ENCODE measurements at regions of chr17 and their contacts with region 1.

Region 1: GRCh38 chr17:42287926-42288802 is at the start of gene STAT5A:
- DNase-seq: peak; percentile 77 to 90
- ATAC-seq: peak; percentile 82 to 96 (median 89)
- H3K4me3 ChIP-seq: peak within 1 kb of the TSS; percentile 86
- H3K4me3 Mint-ChIP-seq: peak within 1 kb of the TSS; percentile 93
- H3K27ac ChIP-seq: peak within 1 kb of the TSS; percentile 93
- H3K27ac Mint-ChIP-seq: peak within 1 kb of the TSS; percentile 93 to 95
- H3K4me1 ChIP-seq: peaks cover 41% of the 10 kb centered on the region
- H3K4me1 Mint-ChIP-seq: peaks cover 39 to 46% of the 10 kb centered on the region in 2 donors
- H3K27me3 ChIP-seq: no peaks in the 10 kb centered on the region
- H3K27me3 Mint-ChIP-seq: no peaks in the 10 kb centered on the region
- CTCF ChIP-seq: no peak
- total RNA-seq, gene STAT5A: 112 to 135 (median 117) TPM

Region 2: GRCh38 chr17:42183741-42184711 is 104.1 kb before region 1 on chr17:
- intact Hi-C with region 1: loop called (anchors 5 kb)
- DNase-seq: peak; percentile 82 to 88
- ATAC-seq: peak; percentile 73 to 86 (median 73)
- H3K4me3 ChIP-seq: peak overlapping the region; percentile 78
- H3K4me3 Mint-ChIP-seq: peak overlapping the region; percentile 94
- H3K27ac ChIP-seq: peak overlapping the region; percentile 88
- H3K27ac Mint-ChIP-seq: peak overlapping the region; percentile 85 to 86
- H3K4me1 ChIP-seq: peaks cover 44% of the 10 kb centered on the region
- H3K4me1 Mint-ChIP-seq: peaks cover 22 to 36% of the 10 kb centered on the region in 2 donors
- H3K27me3 ChIP-seq: peaks cover 12% of the 10 kb centered on the region
- H3K27me3 Mint-ChIP-seq: peaks cover 0 to 12% of the 10 kb centered on the region in 2 donors
- CTCF ChIP-seq: peak; percentile 90

Region 3: GRCh38 chr17:42248351-42249179 is 39.6 kb before region 1 on chr17:
- intact Hi-C with region 1: loop called (anchors 1 kb)
- DNase-seq: peak; percentile 69 to 95
- ATAC-seq: peak; percentile 93 to 98 (median 96)
- H3K4me3 ChIP-seq: peak overlapping the region; percentile 28
- H3K4me3 Mint-ChIP-seq: peak overlapping the region; percentile 93
- H3K27ac ChIP-seq: peak overlapping the region; percentile 88
- H3K27ac Mint-ChIP-seq: peak overlapping the region; percentile 97 to 100
- H3K4me1 ChIP-seq: peaks cover 32% of the 10 kb centered on the region
- H3K4me1 Mint-ChIP-seq: peaks cover 39 to 48% of the 10 kb centered on the region in 2 donors
- H3K27me3 ChIP-seq: no peaks in the 10 kb centered on the region
- H3K27me3 Mint-ChIP-seq: no peaks in the 10 kb centered on the region
- CTCF ChIP-seq: no peak

Region 4: DNA sequence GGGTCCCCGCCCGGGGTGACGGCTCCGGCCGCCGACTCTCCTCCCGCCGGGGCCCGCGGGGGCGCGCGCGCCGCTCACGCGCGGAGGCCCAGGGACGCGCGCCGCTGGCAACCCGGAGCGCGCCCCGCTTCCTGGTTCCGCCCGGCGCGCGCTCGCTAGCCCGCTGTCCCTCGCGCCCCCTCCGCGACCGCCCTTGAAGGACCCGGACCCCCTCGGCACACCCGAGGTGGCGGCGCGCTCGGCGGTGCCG is 11.9 kb before region 1 on chr17 and contains the start of gene STAT5B:
- intact Hi-C with region 1: loop called (anchors 2 kb)
- DNase-seq: peak; percentile 82 to 88
- ATAC-seq: peak; percentile 77 to 92 (median 83)
- H3K4me3 ChIP-seq: peak within 1 kb of the TSS; percentile 73
- H3K4me3 Mint-ChIP-seq: peak within 1 kb of the TSS; percentile 98
- H3K27ac ChIP-seq: peak within 1 kb of the TSS; percentile 74
- H3K27ac Mint-ChIP-seq: peak within 1 kb of the TSS; percentile 88 to 92
- H3K4me1 ChIP-seq: peaks cover 19% of the 10 kb centered on the region
- H3K4me1 Mint-ChIP-seq: peaks cover 52 to 56% of the 10 kb centered on the region in 2 donors
- H3K27me3 ChIP-seq: no peaks in the 10 kb centered on the region
- H3K27me3 Mint-ChIP-seq: no peaks in the 10 kb centered on the region
- CTCF ChIP-seq: no peak
- total RNA-seq, gene STAT5B: 79.9 to 112 (median 103) TPM

Region 5: DNA sequence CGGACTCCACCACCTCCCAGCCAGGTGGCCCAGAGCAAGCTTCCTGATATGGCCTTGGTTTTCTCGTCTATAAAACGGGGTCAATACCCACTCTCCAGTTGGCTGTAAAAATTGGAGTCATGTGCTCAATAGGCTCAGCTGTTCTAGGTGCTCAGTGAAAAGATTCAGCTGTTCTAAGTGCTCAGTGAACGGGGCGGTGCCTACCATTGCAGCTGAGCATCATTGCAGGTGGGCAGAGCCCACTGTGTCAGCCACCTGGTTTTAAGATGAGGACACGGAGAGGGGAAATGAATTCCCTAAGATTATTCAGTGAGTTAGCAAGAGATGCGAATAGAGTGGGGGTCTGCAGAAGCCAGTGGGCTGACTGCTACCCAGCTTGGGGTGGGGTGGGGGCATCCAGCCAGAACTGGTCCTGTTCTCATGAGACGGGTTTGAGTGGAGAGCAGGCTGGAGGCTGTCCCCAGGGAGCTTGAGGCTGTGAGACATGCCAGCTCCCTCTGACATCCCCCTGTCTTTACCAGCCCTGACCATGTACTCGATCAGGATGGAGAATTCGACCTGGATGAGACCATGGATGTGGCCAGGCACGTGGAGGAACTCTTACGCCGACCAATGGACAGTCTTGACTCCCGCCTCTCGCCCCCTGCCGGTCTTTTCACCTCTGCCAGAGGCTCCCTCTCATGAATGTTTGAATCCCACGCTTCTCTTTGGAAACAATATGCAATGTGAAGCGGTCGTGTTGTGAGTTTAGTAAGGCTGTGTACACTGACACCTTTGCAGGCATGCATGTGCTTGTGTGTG is 22.0 kb after region 1 on chr17:
- intact Hi-C with region 1: no loop called
- DNase-seq: no peak
- ATAC-seq: no peak
- H3K4me3 ChIP-seq: no peak overlapping the region
- H3K4me3 Mint-ChIP-seq: no peak overlapping the region
- H3K27ac ChIP-seq: no peak overlapping the region
- H3K27ac Mint-ChIP-seq: peak overlapping the region; percentile 40 to 61
- H3K4me1 ChIP-seq: peaks cover 32% of the 10 kb centered on the region
- H3K4me1 Mint-ChIP-seq: peaks cover 7 to 29% of the 10 kb centered on the region in 2 donors
- H3K27me3 ChIP-seq: no peaks in the 10 kb centered on the region
- H3K27me3 Mint-ChIP-seq: no peaks in the 10 kb centered on the region
- CTCF ChIP-seq: no peak

Region 6: DNA sequence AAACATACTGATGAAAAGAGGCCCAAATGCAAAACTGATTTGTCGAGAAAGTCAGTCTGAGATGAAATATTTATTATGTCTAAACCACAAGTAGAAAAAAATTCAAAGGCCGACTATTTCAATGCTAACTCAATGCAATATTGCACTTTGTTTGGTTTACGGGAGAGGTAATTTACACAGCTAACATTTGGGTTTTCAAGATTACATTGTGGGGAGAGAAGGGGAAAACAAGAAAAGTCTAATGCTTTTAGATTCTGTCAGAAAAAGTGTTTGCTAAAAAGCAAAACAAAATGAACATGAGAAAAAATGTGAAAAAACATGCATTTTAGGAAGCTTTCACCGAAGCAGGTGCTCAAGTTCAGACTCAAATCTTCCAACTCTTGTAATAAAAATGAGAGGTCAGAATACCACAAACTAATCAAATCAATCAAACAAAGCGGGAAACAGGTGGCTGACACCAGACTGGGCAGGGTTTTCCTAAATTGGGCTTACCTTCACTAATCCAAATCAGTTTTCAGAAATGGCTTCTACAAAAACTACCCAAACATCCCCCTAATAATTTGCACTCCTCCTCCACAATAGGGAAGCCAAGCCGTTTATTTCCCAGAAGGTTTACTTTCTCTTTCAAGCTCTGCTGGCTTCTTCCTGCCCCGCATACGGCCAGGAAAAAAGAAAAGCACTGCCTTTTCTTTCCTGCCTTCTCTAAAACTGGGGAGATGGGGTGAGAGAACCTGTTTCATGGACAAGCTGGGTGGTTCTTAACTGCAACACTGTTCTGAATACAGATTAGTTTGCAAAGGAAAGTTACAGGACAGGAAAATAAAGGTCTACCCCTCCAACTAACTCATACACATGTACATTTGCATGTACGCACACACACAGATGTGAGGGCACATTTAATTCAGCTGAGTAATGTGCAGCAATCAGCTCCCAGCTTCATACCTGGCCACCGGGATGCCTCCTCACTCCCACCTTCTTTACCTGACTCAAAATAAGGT is 90.7 kb after region 1 on chr17:
- intact Hi-C with region 1: no loop called
- DNase-seq: peak in 1 of 2 donors; percentile 40
- ATAC-seq: peak; percentile 58 to 76 (median 60)
- H3K4me3 ChIP-seq: no peak overlapping the region
- H3K4me3 Mint-ChIP-seq: peak overlapping the region; percentile 83
- H3K27ac ChIP-seq: peak overlapping the region; percentile 40
- H3K27ac Mint-ChIP-seq: peak overlapping the region; percentile 72 to 73
- H3K4me1 ChIP-seq: peaks cover 15% of the 10 kb centered on the region
- H3K4me1 Mint-ChIP-seq: peaks cover 47 to 57% of the 10 kb centered on the region in 2 donors
- H3K27me3 ChIP-seq: no peaks in the 10 kb centered on the region
- H3K27me3 Mint-ChIP-seq: no peaks in the 10 kb centered on the region
- CTCF ChIP-seq: no peak